ENCODE measurements at regions of chr1 and their contacts with region 1.

Region 1: DNA sequence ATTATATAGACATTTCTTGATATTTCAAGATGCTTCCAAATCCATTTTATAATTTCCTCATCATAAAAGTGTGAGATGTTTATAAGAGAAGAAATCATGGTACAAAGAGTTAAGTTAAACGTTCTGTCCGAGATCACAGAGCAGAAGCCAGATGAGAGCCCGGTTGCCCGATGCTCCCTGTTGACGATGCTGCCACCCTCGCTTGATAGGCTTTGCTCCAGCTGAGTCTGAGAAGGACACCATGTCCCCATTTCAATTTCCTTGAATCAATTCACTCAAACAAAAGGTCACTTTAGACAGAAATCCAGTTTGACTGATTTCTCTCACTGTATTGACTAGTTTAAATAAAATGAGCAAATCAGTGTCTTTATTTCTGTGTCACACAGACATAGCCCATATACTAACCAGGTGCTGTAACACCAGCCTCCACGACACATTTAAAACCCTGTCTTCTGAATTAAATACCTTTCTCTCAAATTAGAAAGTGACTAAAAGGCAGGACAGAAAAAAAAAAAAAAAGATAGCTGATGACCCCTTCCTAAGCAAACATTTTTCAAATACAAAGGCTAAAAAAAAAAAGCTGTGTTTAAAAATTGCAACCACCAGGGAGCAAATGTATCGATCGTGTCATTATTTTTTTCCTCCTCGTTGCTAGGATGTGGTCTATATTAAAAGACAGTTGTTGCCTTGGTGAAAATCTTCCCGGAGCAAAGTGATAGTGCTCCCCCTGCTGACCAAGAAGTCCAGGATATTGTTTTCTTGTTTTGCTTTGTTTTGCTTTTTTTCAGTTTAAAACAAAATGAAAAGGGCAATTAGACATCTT is 35.2 kb downstream of the DNASE2B start:
- DNase-seq: peak in 7 of 9 donors; percentile 71 to 85 (median 79)
- ATAC-seq: peak; percentile 92
- H3K4me3 ChIP-seq: peak overlapping the region; percentile 34
- H3K4me3 Mint-ChIP-seq: peak overlapping the region in 9 of 10 donors; percentile 29 to 82 (median 77)
- H3K27ac ChIP-seq: peak overlapping the region; percentile 73
- H3K27ac Mint-ChIP-seq: peak overlapping the region in 2 of 9 donors; percentile 85 to 90
- H3K4me1 ChIP-seq: peaks cover 23 to 41% of the 10 kb centered on the region in 2 donors
- H3K4me1 Mint-ChIP-seq: peaks cover 0 to 12% (median 9%) of the 10 kb centered on the region in 7 donors
- H3K27me3 ChIP-seq: no peaks in the 10 kb centered on the region
- H3K27me3 Mint-ChIP-seq: no peaks in the 10 kb centered on the region

Region 2: GRCh38 chr1:83508485-83509151 is 924.9 kb before region 1 on chr1:
- CTCF ChIA-PET with region 1: no interaction called
- POLR2A ChIA-PET with region 1: no interaction called
- intact Hi-C with region 1: loop called in 1 of 2 experiments (anchors 5 kb)
- DNase-seq: peak in 8 of 9 donors; percentile 27 to 89 (median 84)
- ATAC-seq: peak; percentile 96
- H3K4me3 ChIP-seq: peak overlapping the region; percentile 7
- H3K4me3 Mint-ChIP-seq: peak overlapping the region; percentile 56 to 96 (median 74)
- H3K27ac ChIP-seq: peak overlapping the region; percentile 76
- H3K27ac Mint-ChIP-seq: peak overlapping the region; percentile 89 to 99 (median 95)
- H3K4me1 ChIP-seq: peaks cover 6 to 36% of the 10 kb centered on the region in 2 donors
- H3K4me1 Mint-ChIP-seq: peaks cover 17 to 78% (median 64%) of the 10 kb centered on the region in 7 donors
- H3K27me3 ChIP-seq: no peaks in the 10 kb centered on the region
- H3K27me3 Mint-ChIP-seq: no peaks in the 10 kb centered on the region

Region 3: DNA sequence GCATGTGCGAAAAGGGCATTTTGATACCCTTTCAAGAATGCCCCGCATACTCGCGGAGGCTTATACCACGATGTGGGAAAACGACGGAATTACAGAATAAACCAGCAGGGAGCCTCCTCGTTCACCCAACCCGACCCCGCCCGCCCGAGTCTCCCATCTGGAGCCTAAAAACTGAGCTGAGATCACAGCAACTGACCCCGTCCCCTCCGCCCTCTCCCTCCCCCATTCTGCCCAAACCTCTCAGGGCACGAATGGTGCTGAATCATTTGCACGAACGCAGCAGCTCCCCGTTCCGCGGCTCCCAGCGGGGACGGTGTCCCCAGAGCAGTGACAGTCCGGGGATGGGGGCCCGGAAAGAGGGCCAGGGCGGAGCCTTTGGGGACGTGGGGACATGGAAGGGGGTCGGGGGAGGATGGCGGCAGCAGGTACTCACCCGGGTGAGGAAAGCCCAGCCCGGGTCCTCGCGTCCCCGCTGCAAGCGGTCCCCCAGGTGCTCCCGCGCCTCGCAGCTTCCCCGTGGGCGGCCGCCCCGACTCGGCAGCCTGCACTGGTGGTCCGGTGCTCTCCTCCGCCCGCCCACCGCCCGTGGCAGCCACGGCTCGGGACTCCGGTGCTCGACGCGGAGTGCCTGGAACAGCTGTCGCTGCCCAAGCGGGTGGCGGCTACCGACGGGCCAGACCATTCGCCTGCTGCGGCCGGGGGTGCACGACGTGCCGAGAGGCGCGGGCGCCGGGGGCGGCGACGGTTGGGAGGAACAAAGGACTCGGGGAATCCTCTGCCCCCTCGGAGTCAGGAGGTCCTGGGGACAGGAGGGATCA is 434.8 kb before region 1 on chr1 and contains the start of gene TTLL7:
- CTCF ChIA-PET with region 1: no interaction called
- POLR2A ChIA-PET with region 1: no interaction called
- intact Hi-C with region 1: loop called in 1 of 2 experiments (anchors 2 kb)
- DNase-seq: peak; percentile 10 to 75 (median 23)
- ATAC-seq: peak; percentile 81
- H3K4me3 ChIP-seq: peak within 1 kb of the TSS; percentile 53
- H3K4me3 Mint-ChIP-seq: peak within 1 kb of the TSS; percentile 74 to 92 (median 85)
- H3K27ac ChIP-seq: no peak within 1 kb of the TSS
- H3K27ac Mint-ChIP-seq: peak within 1 kb of the TSS in 2 of 9 donors; percentile 56 to 58
- H3K4me1 ChIP-seq: peaks cover 6 to 7% of the 10 kb centered on the region in 2 donors
- H3K4me1 Mint-ChIP-seq: peaks cover 9 to 20% (median 17%) of the 10 kb centered on the region in 7 donors
- H3K27me3 ChIP-seq: peaks cover 4 to 13% of the 10 kb centered on the region in 2 donors
- H3K27me3 Mint-ChIP-seq: peaks cover 61 to 78% (median 68%) of the 10 kb centered on the region in 5 donors
- total RNA-seq, gene TTLL7: 0.27 to 2.1 (median 1.1) TPM in 3 of 5 experiments, not detected in the others

Region 4: DNA sequence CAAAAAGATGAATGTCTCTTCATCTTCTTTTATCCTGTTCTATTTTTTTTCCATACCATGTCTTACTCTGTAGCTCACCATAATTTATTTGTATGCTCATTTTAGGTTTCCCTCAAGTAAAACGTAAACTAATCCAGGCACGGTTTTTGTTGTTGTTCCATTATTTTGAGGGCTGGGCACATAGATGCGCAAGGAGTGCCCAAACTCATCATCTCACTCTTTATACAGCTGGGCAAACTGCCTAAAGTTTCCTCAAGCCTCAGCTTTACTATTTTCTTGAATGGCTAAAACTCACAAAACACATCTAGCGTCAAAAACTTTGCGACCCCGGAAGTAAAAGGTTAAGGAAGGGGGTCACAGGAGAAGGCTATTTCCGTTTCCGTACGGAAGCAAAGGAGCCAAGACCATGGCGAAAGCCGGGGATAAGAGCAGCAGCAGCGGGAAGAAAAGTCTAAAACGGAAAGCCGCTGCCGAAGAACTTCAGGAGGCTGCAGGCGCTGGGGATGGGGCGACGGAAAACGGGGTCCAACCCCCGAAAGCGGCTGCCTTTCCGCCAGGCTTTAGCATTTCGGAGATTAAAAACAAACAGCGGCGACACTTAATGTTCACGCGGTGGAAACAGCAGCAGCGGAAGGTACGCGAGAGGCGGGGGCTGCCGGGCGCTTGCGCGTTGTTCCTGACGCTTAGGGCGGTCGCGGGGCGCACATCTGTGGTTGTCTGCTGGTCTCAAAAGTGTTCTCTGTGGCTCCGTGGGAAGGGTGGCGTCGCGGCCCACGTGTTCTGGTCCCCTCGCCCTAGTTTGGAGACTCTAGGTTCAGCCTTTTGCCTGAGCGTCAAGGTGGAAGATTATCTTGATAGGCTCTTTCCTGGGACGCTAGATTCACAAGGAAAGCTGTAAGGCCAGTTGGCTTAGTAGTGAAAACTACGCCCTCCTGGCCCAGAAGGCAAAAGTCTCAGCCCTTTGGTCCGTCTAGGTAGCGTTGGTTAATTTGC is 45.7 kb after region 1 on chr1 and contains the start of gene RPF1:
- CTCF ChIA-PET with region 1: interaction called, 4 read pairs
- POLR2A ChIA-PET with region 1: interaction called, 5 read pairs
- intact Hi-C with region 1: loop called in 1 of 2 experiments (anchors 1 kb)
- DNase-seq: peak; percentile 61 to 88 (median 83)
- ATAC-seq: peak; percentile 97
- H3K4me3 ChIP-seq: peak within 1 kb of the TSS; percentile 72
- H3K4me3 Mint-ChIP-seq: peak within 1 kb of the TSS; percentile 88 to 100 (median 98)
- H3K27ac ChIP-seq: peak within 1 kb of the TSS; percentile 80
- H3K27ac Mint-ChIP-seq: peak within 1 kb of the TSS; percentile 98 to 100 (median 99)
- H3K4me1 ChIP-seq: peaks cover 22 to 28% of the 10 kb centered on the region in 2 donors
- H3K4me1 Mint-ChIP-seq: peaks cover 29 to 60% (median 49%) of the 10 kb centered on the region in 7 donors
- H3K27me3 ChIP-seq: peaks cover 0 to 7% of the 10 kb centered on the region in 2 donors
- H3K27me3 Mint-ChIP-seq: peaks cover 21 to 35% (median 26%) of the 10 kb centered on the region in 5 donors
- total RNA-seq, gene RPF1: 35.5 to 52.3 (median 44.1) TPM

Region 5: DNA sequence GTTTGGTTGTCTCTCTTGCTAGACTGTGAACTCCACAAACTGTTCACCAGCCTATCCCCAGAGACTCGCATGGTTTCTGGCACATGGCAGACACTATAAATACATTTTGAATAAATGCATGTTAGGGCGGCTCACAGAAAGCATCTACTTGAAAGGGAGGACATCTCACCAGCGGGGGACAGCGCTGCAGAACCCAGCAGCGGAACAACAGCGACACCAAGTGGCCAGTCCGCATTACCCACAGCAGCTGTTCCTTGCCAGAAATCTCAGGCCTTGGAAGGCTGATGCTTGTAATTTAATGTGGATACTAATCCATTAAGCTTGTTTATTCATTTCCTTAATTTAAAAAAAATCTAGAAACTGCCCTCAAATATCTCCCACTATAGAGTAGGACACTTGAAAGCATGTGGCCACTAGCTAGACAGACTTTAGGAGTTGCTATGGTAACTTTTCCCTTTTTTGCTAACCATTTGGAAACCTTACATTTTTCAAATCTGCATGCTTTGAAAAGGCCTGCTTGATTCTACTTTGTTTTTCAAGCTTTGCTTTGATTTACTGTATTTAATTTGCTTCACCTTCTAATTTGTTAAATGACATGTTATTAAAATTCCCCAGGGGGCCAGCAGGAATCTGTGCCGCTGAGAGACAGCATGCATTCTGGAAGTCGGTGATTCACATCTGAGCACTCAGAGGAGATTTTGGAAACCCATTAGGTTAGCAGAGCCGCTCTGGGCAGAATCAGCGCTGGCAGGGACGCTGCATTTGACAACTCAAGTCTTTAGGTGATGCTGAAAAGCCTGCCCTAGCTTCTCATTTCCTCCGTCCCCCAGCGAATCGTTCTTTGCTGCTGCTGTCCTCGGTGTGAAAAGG is 320.3 kb after region 1 on chr1:
- CTCF ChIA-PET with region 1: interaction called, 6 read pairs
- POLR2A ChIA-PET with region 1: interaction called, 5 read pairs
- intact Hi-C with region 1: loop called in 1 of 2 experiments (anchors 2 kb)
- DNase-seq: peak; percentile 47 to 77 (median 67)
- ATAC-seq: peak; percentile 93
- H3K4me3 ChIP-seq: no peak overlapping the region
- H3K4me3 Mint-ChIP-seq: no peak overlapping the region
- H3K27ac ChIP-seq: no peak overlapping the region
- H3K27ac Mint-ChIP-seq: peak overlapping the region in 1 of 9 donors; percentile 29
- H3K4me1 ChIP-seq: no peaks in the 10 kb centered on the region
- H3K4me1 Mint-ChIP-seq: peaks cover 0 to 7% (median 3%) of the 10 kb centered on the region in 7 donors
- H3K27me3 ChIP-seq: no peaks in the 10 kb centered on the region
- H3K27me3 Mint-ChIP-seq: peaks cover 9 to 26% (median 18%) of the 10 kb centered on the region in 5 donors

Region 6: GRCh38 chr1:85259118-85259911 is 825.8 kb after region 1 on chr1 and contains the start of gene C1orf52:
- CTCF ChIA-PET with region 1: no interaction called
- POLR2A ChIA-PET with region 1: no interaction called
- intact Hi-C with region 1: loop called (anchors 5 to 10 kb)
- DNase-seq: peak; percentile 92 to 99 (median 96)
- ATAC-seq: peak; percentile 99
- H3K4me3 ChIP-seq: peak within 1 kb of the TSS; percentile 83
- H3K4me3 Mint-ChIP-seq: peak within 1 kb of the TSS; percentile 93 to 99 (median 98)
- H3K27ac ChIP-seq: peak within 1 kb of the TSS; percentile 90
- H3K27ac Mint-ChIP-seq: peak within 1 kb of the TSS; percentile 91 to 98 (median 96)
- H3K4me1 ChIP-seq: peaks cover 14 to 16% of the 10 kb centered on the region in 2 donors
- H3K4me1 Mint-ChIP-seq: peaks cover 19 to 52% (median 45%) of the 10 kb centered on the region in 7 donors
- H3K27me3 ChIP-seq: no peaks in the 10 kb centered on the region
- H3K27me3 Mint-ChIP-seq: no peaks in the 10 kb centered on the region
- total RNA-seq, gene C1orf52: 25.7 to 55.4 (median 46.1) TPM